ENCODE measurements at regions of chrX and their contacts with region 1.

Region 1: GRCh38 chrX:103107836-103108235 is 14.9 kb upstream of the NXF3 start:
- DNase-seq: no peak
- ATAC-seq: no peak

Region 2: DNA sequence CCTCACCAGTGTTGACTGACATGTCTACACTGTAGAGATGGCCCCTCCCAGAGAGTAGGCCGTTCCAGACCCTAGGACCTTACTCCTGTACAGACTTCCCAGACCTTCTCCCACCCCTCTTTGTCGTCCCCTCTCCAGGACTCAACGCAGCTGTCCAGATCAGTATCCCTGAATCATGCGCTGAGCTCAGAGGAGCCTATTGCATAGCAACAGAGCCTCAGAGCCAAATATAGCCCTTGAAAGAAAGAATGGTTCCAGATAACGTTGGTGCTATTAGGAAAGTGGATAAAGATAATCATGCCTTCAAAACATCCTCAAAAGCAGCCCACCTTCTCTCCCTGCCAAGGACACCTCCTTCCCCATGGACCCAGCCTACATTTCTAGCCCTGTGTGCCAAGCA is 12.9 kb after region 1 on chrX:
- intact Hi-C with region 1: loop called (anchors 1 kb)
- DNase-seq: no peak
- ATAC-seq: no peak

Measured in sciatic nerve (tissue), 2 donors.